ENCODE measurements at regions of chr3 and their contacts with region 1.

Region 1: GRCh38 chr3:42961633-42962032 is 17.5 kb upstream of the GASK1A start:
- DNase-seq: peak; percentile 31
- ATAC-seq: no peak
- H3K4me3 Mint-ChIP-seq: no peak overlapping the region
- H3K27ac Mint-ChIP-seq: no peak overlapping the region
- H3K4me1 Mint-ChIP-seq: peaks cover 22% of the 10 kb centered on the region
- H3K27me3 Mint-ChIP-seq: no peaks in the 10 kb centered on the region

Region 2: GRCh38 chr3:43071313-43071893 is 109.8 kb after region 1 on chr3:
- CTCF ChIA-PET with region 1: interaction called, 18 read pairs
- POLR2A ChIA-PET with region 1: no interaction called
- intact Hi-C with region 1: loop called (anchors 1 to 2 kb)
- DNase-seq: peak; percentile 38
- ATAC-seq: peak; percentile 36
- H3K4me3 Mint-ChIP-seq: no peak overlapping the region
- H3K27ac Mint-ChIP-seq: no peak overlapping the region
- H3K4me1 Mint-ChIP-seq: peaks cover 3% of the 10 kb centered on the region
- H3K27me3 Mint-ChIP-seq: no peaks in the 10 kb centered on the region

Region 3: DNA sequence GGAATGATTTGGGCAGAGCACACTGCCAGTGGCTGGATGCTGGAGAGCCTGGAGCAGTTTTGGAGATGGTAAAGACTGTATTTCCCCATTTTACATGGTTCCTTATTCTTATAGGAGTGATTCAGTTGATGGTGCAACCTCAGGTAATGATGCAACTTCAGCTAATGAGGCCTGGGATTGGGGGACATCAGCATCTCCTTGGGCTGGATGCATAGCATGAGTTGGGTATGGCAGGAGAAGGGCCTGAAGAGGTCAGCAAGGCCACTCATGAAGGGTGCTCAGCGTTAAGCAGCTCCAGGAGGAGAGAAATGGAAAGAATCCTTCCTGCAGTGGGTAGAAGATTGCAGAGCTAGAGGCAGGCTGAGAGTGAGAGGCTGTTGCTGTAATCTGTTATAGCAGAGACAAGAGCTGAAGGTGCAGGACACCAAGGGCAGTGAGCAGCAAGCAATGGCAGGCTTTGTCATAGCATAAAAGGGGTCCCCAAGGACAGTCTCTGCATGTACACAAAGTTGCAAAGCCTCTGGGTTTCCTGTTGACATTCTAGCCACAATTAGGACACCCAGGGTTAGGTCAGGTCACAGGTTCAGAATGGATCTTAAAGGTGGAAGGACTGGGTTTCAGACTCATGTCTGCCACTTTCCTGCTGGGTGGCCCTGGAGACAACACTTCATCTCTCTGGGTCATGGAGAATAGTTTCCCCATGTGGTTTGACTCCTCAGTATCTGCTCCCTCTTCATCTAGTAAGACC is 295.3 kb after region 1 on chr3:
- CTCF ChIA-PET with region 1: no interaction called
- POLR2A ChIA-PET with region 1: no interaction called
- intact Hi-C with region 1: no loop called
- DNase-seq: no peak
- ATAC-seq: peak; percentile 23
- H3K4me3 Mint-ChIP-seq: no peak overlapping the region
- H3K27ac Mint-ChIP-seq: no peak overlapping the region
- H3K4me1 Mint-ChIP-seq: peaks cover 23% of the 10 kb centered on the region
- H3K27me3 Mint-ChIP-seq: no peaks in the 10 kb centered on the region

Region 4: GRCh38 chr3:43423142-43423541 is 461.5 kb after region 1 on chr3:
- CTCF ChIA-PET with region 1: no interaction called
- POLR2A ChIA-PET with region 1: no interaction called
- intact Hi-C with region 1: no loop called
- DNase-seq: no peak
- ATAC-seq: no peak
- H3K4me3 Mint-ChIP-seq: no peak overlapping the region
- H3K27ac Mint-ChIP-seq: no peak overlapping the region
- H3K4me1 Mint-ChIP-seq: no peaks in the 10 kb centered on the region
- H3K27me3 Mint-ChIP-seq: no peaks in the 10 kb centered on the region

Measured in activated CD4-positive, alpha-beta T cell treated with anti-CD3 and anti-CD28 coated beads for 36 hours (primary cell).